ENCODE measurements at regions of chr12 and their contacts with region 1.

Region 1: DNA sequence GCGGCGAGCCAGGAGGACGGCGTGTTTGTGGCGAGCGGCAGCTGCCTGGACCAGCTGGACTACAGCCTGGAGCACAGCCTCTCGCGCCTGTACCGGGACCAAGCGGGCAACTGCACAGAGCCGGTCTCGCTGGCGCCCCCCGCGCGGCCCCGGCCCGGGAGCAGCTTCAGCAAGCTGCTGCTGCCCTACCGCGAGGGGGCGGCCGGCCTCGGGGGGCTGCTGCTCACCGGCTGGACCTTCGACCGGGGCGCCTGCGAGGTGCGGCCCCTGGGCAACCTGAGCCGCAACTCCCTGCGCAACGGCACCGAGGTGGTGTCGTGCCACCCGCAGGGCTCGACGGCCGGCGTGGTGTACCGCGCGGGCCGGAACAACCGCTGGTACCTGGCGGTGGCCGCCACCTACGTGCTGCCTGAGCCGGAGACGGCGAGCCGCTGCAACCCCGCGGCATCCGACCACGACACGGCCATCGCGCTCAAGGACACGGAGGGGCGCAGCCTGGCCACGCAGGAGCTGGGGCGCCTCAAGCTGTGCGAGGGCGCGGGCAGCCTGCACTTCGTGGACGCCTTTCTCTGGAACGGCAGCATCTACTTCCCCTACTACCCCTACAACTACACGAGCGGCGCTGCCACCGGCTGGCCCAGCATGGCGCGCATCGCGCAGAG is 873 bp downstream of the PLXNC1 start:
- DNase-seq: peak in 4 of 5 donors; percentile 40 to 54 (median 48)
- H3K4me3 ChIP-seq: peak overlapping the region; percentile 57 to 62
- H3K4me3 Mint-ChIP-seq: peak overlapping the region; percentile 92 to 98 (median 94)
- H3K27ac ChIP-seq: no peak overlapping the region
- H3K27ac Mint-ChIP-seq: peak overlapping the region in 1 of 7 donors; percentile 42
- H3K4me1 ChIP-seq: peaks cover 33% of the 10 kb centered on the region
- H3K4me1 Mint-ChIP-seq: peaks cover 27 to 56% (median 41%) of the 10 kb centered on the region in 4 donors
- H3K27me3 ChIP-seq: no peaks in the 10 kb centered on the region
- H3K27me3 Mint-ChIP-seq: no peaks in the 10 kb centered on the region

Region 2: DNA sequence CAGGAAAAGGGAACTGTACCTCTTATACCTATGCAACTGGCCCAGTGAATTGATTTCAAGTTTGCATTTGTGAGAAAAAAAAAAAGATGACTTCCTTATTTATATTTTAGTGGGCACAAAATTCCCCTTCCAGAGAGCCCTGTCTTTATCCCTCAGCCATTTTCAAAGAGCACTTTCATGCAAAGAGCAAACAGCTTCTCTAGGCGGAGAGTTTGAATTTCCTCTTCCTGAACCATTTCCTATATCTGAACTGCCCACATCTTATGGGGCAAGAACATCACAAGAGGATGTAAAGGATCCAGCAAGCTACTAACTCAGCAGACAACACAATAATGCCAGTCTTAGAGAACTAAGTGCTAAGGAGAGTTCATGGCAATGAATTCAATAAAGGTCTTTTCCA is 23.2 kb before region 1 on chr12:
- CTCF ChIA-PET with region 1: interaction called, 4 read pairs
- POLR2A ChIA-PET with region 1: interaction called, 11 read pairs
- intact Hi-C with region 1: no loop called
- DNase-seq: peak in 1 of 5 donors; percentile 1
- H3K4me3 ChIP-seq: no peak overlapping the region
- H3K4me3 Mint-ChIP-seq: peak overlapping the region in 6 of 8 donors; percentile 38 to 64 (median 60)
- H3K27ac ChIP-seq: no peak overlapping the region
- H3K27ac Mint-ChIP-seq: peak overlapping the region; percentile 6 to 89 (median 51)
- H3K4me1 ChIP-seq: peaks cover 53% of the 10 kb centered on the region
- H3K4me1 Mint-ChIP-seq: peaks cover 39 to 66% (median 51%) of the 10 kb centered on the region in 4 donors
- H3K27me3 ChIP-seq: no peaks in the 10 kb centered on the region
- H3K27me3 Mint-ChIP-seq: peaks cover 0 to 4% of the 10 kb centered on the region in 2 donors

Region 3: GRCh38 chr12:94262228-94263010 is 113.2 kb after region 1 on chr12:
- CTCF ChIA-PET with region 1: interaction called, 3 read pairs
- POLR2A ChIA-PET with region 1: interaction called, 28 read pairs
- intact Hi-C with region 1: loop called (anchors 1 kb)
- DNase-seq: peak; percentile 71 to 82 (median 76)
- H3K4me3 ChIP-seq: peak overlapping the region; percentile 40 to 84
- H3K4me3 Mint-ChIP-seq: peak overlapping the region; percentile 95 to 98 (median 97)
- H3K27ac ChIP-seq: peak overlapping the region; percentile 74
- H3K27ac Mint-ChIP-seq: peak overlapping the region; percentile 97 to 99 (median 99)
- H3K4me1 ChIP-seq: peaks cover 28% of the 10 kb centered on the region
- H3K4me1 Mint-ChIP-seq: peaks cover 19 to 56% (median 33%) of the 10 kb centered on the region in 4 donors
- H3K27me3 ChIP-seq: no peaks in the 10 kb centered on the region
- H3K27me3 Mint-ChIP-seq: no peaks in the 10 kb centered on the region

Region 4: GRCh38 chr12:94459728-94460615 is 310.7 kb after region 1 on chr12 and contains the start of gene CEP83:
- CTCF ChIA-PET with region 1: interaction called, 3 read pairs
- POLR2A ChIA-PET with region 1: interaction called, 14 read pairs
- intact Hi-C with region 1: loop called (anchors 1 kb)
- DNase-seq: peak; percentile 93 to 97 (median 95)
- H3K4me3 ChIP-seq: peak within 1 kb of the TSS; percentile 89 to 98
- H3K4me3 Mint-ChIP-seq: peak within 1 kb of the TSS; percentile 94 to 98 (median 96)
- H3K27ac ChIP-seq: peak within 1 kb of the TSS; percentile 82
- H3K27ac Mint-ChIP-seq: peak within 1 kb of the TSS; percentile 93 to 98 (median 96)
- H3K4me1 ChIP-seq: peaks cover 15% of the 10 kb centered on the region
- H3K4me1 Mint-ChIP-seq: peaks cover 17 to 47% (median 25%) of the 10 kb centered on the region in 4 donors
- H3K27me3 ChIP-seq: no peaks in the 10 kb centered on the region
- H3K27me3 Mint-ChIP-seq: peaks cover 8% of the 10 kb centered on the region in 2 donors
- total RNA-seq, gene CEP83: 11.2 to 14.8 TPM

Region 5: GRCh38 chr12:94987801-94988200 is 838.6 kb after region 1 on chr12:
- CTCF ChIA-PET with region 1: no interaction called
- POLR2A ChIA-PET with region 1: interaction called, 3 read pairs
- intact Hi-C with region 1: loop called (anchors 5 kb)
- DNase-seq: peak in 4 of 5 donors; percentile 49 to 64 (median 60)
- H3K4me3 ChIP-seq: no peak overlapping the region
- H3K4me3 Mint-ChIP-seq: peak overlapping the region; percentile 16 to 80 (median 72)
- H3K27ac ChIP-seq: peak overlapping the region; percentile 35
- H3K27ac Mint-ChIP-seq: peak overlapping the region; percentile 73 to 95 (median 92)
- H3K4me1 ChIP-seq: peaks cover 65% of the 10 kb centered on the region
- H3K4me1 Mint-ChIP-seq: peaks cover 43 to 69% (median 57%) of the 10 kb centered on the region in 4 donors
- H3K27me3 ChIP-seq: no peaks in the 10 kb centered on the region
- H3K27me3 Mint-ChIP-seq: no peaks in the 10 kb centered on the region